ENCODE measurements at regions of chr19 and their contacts with region 1.

Region 1: DNA sequence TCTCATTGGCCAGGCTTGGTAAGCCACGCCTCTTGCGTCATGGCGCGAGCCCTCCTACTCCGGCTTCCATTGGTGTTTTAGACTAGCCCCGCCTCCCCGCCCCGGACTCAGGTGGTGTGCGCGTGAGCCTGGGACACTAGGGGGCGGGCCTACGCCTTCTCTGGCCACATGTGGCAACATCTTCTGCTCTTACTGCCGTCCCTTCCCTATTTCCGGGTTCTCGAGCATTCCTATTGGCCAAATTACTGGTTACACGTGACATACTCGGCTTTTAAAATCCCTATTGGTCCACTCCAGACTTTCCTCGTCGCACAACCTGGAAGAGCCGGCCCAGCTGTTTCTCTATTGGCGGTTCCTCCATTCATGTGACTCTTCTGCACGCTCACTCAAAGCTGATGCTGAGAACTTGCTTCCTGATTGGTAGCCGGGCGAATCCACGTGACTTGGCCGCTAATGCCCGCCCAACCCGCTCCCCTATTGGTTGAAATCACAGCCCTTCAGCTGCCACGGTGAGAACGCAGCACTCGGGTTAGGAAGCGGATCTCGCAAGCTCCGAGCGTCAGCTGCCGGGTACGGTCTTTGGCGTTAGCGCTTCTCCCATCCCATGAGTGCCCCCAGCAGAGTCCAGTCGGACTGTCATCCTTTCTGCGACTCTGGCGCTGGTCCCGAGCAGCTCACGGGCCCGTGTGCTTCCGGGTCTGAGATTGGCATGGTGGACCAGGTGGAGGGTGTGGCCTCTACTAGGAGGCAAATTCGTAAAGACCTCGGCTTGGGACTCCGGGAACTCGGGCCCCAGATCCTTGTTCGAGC is at the start of gene BLOC1S3:
- DNase-seq: peak; percentile 99 to 100
- ATAC-seq: peak; percentile 85 to 96 (median 85)
- H3K4me3 ChIP-seq: peak within 1 kb of the TSS; percentile 86
- H3K4me3 Mint-ChIP-seq: peak within 1 kb of the TSS; percentile 96
- H3K27ac ChIP-seq: peak within 1 kb of the TSS; percentile 90
- H3K27ac Mint-ChIP-seq: peak within 1 kb of the TSS; percentile 93 to 96
- H3K4me1 ChIP-seq: peaks cover 41% of the 10 kb centered on the region
- H3K4me1 Mint-ChIP-seq: peaks cover 11 to 35% of the 10 kb centered on the region in 2 donors
- H3K27me3 ChIP-seq: no peaks in the 10 kb centered on the region
- H3K27me3 Mint-ChIP-seq: no peaks in the 10 kb centered on the region
- CTCF ChIP-seq: no peak
- total RNA-seq, gene BLOC1S3: 20.9 to 26.3 (median 21.8) TPM

Region 2: GRCh38 chr19:44890366-44891015 is 288.0 kb before region 1 on chr19:
- intact Hi-C with region 1: loop called (anchors 1 kb)
- DNase-seq: peak; percentile 100
- ATAC-seq: peak; percentile 76 to 90 (median 78)
- H3K4me3 ChIP-seq: peak overlapping the region; percentile 72
- H3K4me3 Mint-ChIP-seq: peak overlapping the region; percentile 88
- H3K27ac ChIP-seq: peak overlapping the region; percentile 98
- H3K27ac Mint-ChIP-seq: peak overlapping the region; percentile 88 to 91
- H3K4me1 ChIP-seq: peaks cover 21% of the 10 kb centered on the region
- H3K4me1 Mint-ChIP-seq: peaks cover 25 to 30% of the 10 kb centered on the region in 2 donors
- H3K27me3 ChIP-seq: no peaks in the 10 kb centered on the region
- H3K27me3 Mint-ChIP-seq: no peaks in the 10 kb centered on the region
- CTCF ChIP-seq: no peak

Region 3: GRCh38 chr19:44954824-44955586 is 223.5 kb before region 1 on chr19 and contains the start of gene CLPTM1:
- intact Hi-C with region 1: loop called (anchors 1 kb)
- DNase-seq: peak; percentile 93 to 98
- ATAC-seq: peak; percentile 90 to 97 (median 92)
- H3K4me3 ChIP-seq: peak within 1 kb of the TSS; percentile 92
- H3K4me3 Mint-ChIP-seq: peak within 1 kb of the TSS; percentile 96
- H3K27ac ChIP-seq: peak within 1 kb of the TSS; percentile 84
- H3K27ac Mint-ChIP-seq: peak within 1 kb of the TSS; percentile 94 to 95
- H3K4me1 ChIP-seq: peaks cover 39% of the 10 kb centered on the region
- H3K4me1 Mint-ChIP-seq: peaks cover 48% of the 10 kb centered on the region in 2 donors
- H3K27me3 ChIP-seq: no peaks in the 10 kb centered on the region
- H3K27me3 Mint-ChIP-seq: no peaks in the 10 kb centered on the region
- CTCF ChIP-seq: no peak
- total RNA-seq, gene CLPTM1: 97.1 to 125 (median 120) TPM

Region 4: DNA sequence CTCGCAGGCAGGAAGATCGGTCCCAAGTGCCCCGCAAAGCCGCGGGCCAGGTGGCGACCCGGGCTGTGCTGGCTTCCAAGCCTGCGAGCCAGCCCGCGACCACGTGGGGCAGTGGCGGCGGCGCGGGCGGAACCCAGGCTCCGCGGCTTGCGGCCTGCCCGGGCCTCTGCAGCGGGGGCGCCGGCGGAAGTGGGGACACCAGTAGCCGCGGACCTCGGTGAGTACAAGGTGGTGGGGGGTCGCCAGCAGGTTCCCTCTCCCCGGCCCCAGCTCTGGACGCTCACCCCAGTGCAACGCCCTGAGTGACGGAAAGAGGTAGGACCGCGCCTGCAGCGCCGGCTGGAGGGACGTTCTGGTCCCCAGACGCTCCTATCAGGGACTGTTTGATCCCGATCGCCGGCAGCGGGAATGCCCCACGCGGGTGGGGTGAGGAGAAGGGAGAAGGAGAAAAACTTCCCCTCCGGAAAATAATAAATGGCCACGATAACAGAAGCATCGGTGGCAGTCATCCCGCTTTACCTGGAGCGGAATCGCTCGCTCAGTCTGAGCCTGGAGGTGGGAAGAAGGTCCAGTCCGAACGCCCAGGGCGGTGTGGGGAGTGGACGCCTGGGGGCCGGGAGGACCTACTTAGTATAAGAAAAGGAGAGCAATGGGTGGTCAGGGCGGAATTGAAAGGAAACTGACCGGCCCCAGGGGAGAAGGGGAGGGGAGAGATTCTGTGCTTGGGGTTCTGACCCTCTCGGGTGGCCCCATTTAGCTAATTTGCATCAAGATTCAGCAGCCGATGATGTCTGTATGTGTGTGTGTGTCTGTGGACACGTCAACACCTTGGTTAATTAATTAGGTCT is 99.2 kb before region 1 on chr19 and contains the start of gene GEMIN7:
- intact Hi-C with region 1: loop called (anchors 2 kb)
- DNase-seq: peak; percentile 79 to 86
- ATAC-seq: peak; percentile 62 to 72 (median 66)
- H3K4me3 ChIP-seq: peak within 1 kb of the TSS; percentile 71
- H3K4me3 Mint-ChIP-seq: peak within 1 kb of the TSS; percentile 97
- H3K27ac ChIP-seq: peak within 1 kb of the TSS; percentile 84
- H3K27ac Mint-ChIP-seq: peak within 1 kb of the TSS; percentile 96
- H3K4me1 ChIP-seq: peaks cover 51% of the 10 kb centered on the region
- H3K4me1 Mint-ChIP-seq: peaks cover 44 to 62% of the 10 kb centered on the region in 2 donors
- H3K27me3 ChIP-seq: no peaks in the 10 kb centered on the region
- H3K27me3 Mint-ChIP-seq: no peaks in the 10 kb centered on the region
- CTCF ChIP-seq: no peak
- total RNA-seq, gene GEMIN7: 27.7 to 28.7 (median 27.9) TPM

Region 5: DNA sequence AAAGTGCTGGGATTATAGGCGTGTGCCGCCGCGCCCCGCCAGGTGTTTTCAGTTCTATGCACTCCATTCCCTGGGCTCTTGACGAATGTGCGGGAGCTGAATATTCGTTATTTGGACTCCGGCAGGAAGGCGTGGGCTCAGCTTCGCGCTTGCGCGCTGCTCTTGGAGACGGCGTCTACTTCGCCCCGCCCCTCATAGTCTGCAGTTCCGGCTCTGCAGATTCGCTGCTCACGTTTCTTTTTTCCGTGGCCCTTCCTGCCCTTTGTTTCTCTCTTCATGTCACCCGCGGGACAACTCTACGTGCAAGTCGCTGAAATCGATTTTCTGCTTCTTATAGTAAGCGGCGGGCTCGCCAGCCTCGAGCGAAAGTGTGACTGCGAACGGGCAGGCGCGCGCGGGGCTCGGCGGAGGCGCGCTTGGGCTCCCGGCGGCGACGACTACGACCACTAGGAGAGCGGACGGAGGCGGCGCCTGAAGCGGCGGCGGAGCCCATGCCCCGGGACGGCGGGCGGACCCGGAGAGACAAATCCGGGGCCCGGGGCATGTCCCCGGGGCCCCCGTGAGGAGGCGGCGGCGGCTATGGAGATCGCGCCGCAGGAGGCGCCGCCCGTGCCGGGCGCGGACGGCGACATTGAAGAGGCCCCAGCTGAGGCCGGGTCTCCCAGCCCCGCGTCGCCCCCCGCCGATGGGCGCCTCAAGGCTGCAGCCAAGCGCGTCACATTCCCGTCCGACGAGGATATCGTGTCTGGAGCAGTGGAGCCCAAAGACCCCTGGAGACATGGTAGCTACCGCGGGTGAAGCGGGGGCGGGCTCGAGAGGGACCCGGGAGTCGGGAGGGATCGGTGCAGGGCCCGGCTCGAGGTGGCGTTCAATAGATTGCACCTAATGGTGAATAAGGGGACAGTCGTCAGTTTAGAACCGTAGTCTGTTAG is 85.5 kb before region 1 on chr19 and contains the start of gene PPP1R37:
- intact Hi-C with region 1: loop called (anchors 2 kb)
- DNase-seq: peak; percentile 86 to 98
- ATAC-seq: peak; percentile 63 to 83 (median 71)
- H3K4me3 ChIP-seq: peak within 1 kb of the TSS; percentile 93
- H3K4me3 Mint-ChIP-seq: peak within 1 kb of the TSS; percentile 99
- H3K27ac ChIP-seq: peak within 1 kb of the TSS; percentile 95
- H3K27ac Mint-ChIP-seq: peak within 1 kb of the TSS; percentile 97 to 99
- H3K4me1 ChIP-seq: peaks cover 83% of the 10 kb centered on the region
- H3K4me1 Mint-ChIP-seq: peaks cover 71 to 73% of the 10 kb centered on the region in 2 donors
- H3K27me3 ChIP-seq: no peaks in the 10 kb centered on the region
- H3K27me3 Mint-ChIP-seq: no peaks in the 10 kb centered on the region
- CTCF ChIP-seq: peak; percentile 11
- total RNA-seq, gene PPP1R37: 23.8 to 29.3 (median 25.0) TPM

Region 6: DNA sequence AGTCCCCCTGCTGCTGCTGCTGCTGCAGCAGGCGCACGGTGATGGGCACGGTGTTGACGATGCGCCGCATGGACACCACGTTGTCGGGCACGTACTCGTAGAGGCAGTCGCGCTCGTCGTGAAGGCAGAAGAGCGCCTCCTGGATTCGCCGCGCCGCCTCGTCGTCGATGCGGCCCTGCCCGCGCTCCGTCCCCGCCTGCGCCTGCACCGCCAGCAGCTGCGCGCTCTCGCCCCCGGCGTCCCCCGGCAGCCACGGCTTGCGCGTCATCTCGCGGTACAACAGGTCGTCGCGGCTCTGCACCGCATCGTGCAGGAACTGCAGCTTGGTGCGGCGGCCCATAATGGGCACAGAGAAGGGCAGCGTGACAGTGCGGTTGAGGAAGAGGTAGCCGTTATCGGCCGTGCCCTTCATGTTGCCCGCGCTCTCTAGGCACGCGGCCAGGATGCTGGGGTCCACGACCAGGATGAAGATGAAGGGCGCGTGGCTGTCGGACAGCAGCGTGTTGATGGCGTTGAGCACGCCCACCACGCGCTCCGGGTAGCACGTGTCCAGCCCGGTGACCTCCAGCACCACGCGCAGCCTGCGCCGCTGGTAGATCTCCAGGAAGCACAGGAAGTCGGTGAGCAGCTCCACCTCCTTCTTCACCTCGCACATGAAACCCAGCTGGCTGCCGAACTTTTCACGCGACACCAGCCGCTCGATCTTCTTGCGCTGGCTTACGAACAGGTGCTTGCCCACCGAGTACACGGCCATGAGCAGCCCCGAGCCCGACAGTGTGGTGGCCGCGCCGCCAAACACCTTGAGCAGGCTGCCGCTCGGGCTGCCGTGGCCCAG is 25.7 kb before region 1 on chr19:
- intact Hi-C with region 1: no loop called
- DNase-seq: peak; percentile 47 to 74
- ATAC-seq: peak; percentile 78 to 81 (median 80)
- H3K4me3 ChIP-seq: peak overlapping the region; percentile 21
- H3K4me3 Mint-ChIP-seq: peak overlapping the region; percentile 84
- H3K27ac ChIP-seq: no peak overlapping the region
- H3K27ac Mint-ChIP-seq: peak overlapping the region; percentile 56 to 58
- H3K4me1 ChIP-seq: peaks cover 33% of the 10 kb centered on the region
- H3K4me1 Mint-ChIP-seq: peaks cover 14 to 24% of the 10 kb centered on the region in 2 donors
- H3K27me3 ChIP-seq: peaks cover 6% of the 10 kb centered on the region
- H3K27me3 Mint-ChIP-seq: peaks cover 5 to 11% of the 10 kb centered on the region in 2 donors
- CTCF ChIP-seq: no peak

Region 7: DNA sequence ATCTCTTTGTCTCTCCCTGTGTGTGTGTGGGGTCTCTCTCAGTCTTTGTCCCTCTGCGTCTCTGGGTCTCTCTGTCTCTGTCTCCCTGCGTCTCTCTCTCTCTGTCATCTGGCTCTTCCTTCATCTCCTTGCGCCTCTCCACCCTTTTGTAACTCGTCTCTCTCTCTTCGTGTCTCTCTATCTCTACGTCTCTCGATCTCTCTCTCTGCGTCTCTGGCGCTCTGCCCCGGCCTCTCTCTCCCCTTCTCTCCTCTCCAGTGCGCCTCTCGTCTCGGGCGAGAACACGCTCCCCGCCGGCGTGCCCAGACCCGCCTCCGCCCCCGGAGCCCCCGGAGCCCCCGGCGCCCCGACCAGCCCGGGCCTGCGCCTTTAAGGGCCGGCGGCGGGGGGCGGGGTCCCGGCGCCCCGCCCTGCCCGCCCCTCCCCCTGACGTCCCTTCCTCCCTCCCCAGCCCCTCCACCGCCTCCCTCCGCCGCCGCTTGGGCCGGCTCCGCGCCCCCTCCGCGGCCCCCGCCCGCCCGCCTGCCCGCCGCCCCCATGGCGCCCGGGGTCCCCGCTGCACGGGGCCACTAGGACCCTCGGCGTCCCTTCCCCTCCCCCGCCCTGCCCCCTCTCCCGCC is 72.5 kb after region 1 on chr19 and contains the start of gene MARK4:
- intact Hi-C with region 1: no loop called
- DNase-seq: peak; percentile 49 to 81
- ATAC-seq: peak; percentile 74 to 82 (median 74)
- H3K4me3 ChIP-seq: peak within 1 kb of the TSS; percentile 68
- H3K4me3 Mint-ChIP-seq: peak within 1 kb of the TSS; percentile 94
- H3K27ac ChIP-seq: peak within 1 kb of the TSS; percentile 42
- H3K27ac Mint-ChIP-seq: peak within 1 kb of the TSS; percentile 78 to 85
- H3K4me1 ChIP-seq: peaks cover 48% of the 10 kb centered on the region
- H3K4me1 Mint-ChIP-seq: peaks cover 39 to 55% of the 10 kb centered on the region in 2 donors
- H3K27me3 ChIP-seq: no peaks in the 10 kb centered on the region
- H3K27me3 Mint-ChIP-seq: no peaks in the 10 kb centered on the region
- CTCF ChIP-seq: no peak
- total RNA-seq, gene MARK4: 50.4 to 53.6 (median 51.4) TPM

Region 8: GRCh38 chr19:45496349-45496953 is 318.0 kb after region 1 on chr19:
- intact Hi-C with region 1: loop called (anchors 5 kb)
- DNase-seq: peak; percentile 53 to 69
- ATAC-seq: peak; percentile 32 to 50 (median 32)
- H3K4me3 ChIP-seq: peak overlapping the region; percentile 51
- H3K4me3 Mint-ChIP-seq: peak overlapping the region; percentile 75
- H3K27ac ChIP-seq: no peak overlapping the region
- H3K27ac Mint-ChIP-seq: peak overlapping the region in 1 of 2 donors; percentile 83
- H3K4me1 ChIP-seq: peaks cover 54% of the 10 kb centered on the region
- H3K4me1 Mint-ChIP-seq: peaks cover 34 to 58% of the 10 kb centered on the region in 2 donors
- H3K27me3 ChIP-seq: peaks cover 24% of the 10 kb centered on the region
- H3K27me3 Mint-ChIP-seq: peaks cover 10 to 34% of the 10 kb centered on the region in 2 donors
- CTCF ChIP-seq: no peak

Measured in natural killer cell (primary cell).